H1 (cell line): ENCODE measurements at regions of chr11 and their contacts with region 1.

Region 1: DNA sequence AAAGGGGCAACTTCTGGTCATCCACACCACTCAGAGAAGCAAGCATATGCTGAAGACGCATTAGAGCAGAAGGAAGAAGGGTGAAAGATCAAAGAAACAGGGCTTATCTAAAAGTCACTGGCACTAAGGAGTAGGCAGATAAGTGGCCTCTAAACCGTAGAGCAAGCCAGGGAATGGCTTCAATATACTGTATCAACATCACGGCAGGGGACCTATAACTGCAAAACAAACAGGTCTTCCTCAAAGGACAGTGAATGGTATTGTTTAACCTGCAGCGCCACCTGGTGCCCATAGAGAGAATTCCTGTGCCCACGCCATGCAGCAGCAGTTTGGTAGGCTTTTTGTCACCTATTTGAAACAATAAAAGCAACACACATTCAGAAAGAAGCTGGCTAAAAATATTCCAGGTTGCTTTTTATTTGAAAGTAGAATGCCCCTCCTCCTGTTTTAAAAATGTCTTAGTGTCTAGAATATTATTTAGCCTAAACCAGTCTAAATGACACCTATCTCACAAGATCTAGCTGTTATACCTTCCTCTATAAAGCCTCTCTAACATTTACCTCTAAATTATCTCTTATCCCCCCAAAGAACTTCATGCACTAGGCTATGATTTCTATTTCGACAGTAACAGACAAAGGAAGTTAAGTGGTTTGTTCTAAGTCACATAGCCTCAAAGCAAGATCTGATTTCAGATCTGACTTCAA is 21.8 kb downstream of the SNX19 start:
- DNase-seq: peak; percentile 57 to 87
- H3K4me3 ChIP-seq: no peak overlapping the region
- H3K27ac ChIP-seq: no peak overlapping the region
- H3K4me1 ChIP-seq: peaks cover 2 to 8% (median 6%) of the 10 kb centered on the region in 4 experiments; a peak in 5 of 7 replicates
- H3K27me3 ChIP-seq: no peaks in the 10 kb centered on the region
- CTCF ChIP-seq: peak; percentile 75 to 90 (median 78)
- EP300 ChIP-seq: no peak
- POLR2A ChIP-seq: no peak
- RAD21 ChIP-seq: peak; percentile 84 to 86

Region 2: GRCh38 chr11:130872981-130873380 is 21.5 kb before region 1 on chr11:
- CTCF ChIA-PET with region 1: interaction called, 21 read pairs
- POLR2A ChIA-PET with region 1: interaction called, 3 read pairs
- DNase-seq: no peak
- H3K4me3 ChIP-seq: no peak overlapping the region
- H3K27ac ChIP-seq: no peak overlapping the region
- H3K4me1 ChIP-seq: no peaks in the 10 kb centered on the region
- H3K27me3 ChIP-seq: no peaks in the 10 kb centered on the region
- CTCF ChIP-seq: no peak
- EP300 ChIP-seq: no peak
- POLR2A ChIP-seq: no peak
- RAD21 ChIP-seq: no peak

Region 3: DNA sequence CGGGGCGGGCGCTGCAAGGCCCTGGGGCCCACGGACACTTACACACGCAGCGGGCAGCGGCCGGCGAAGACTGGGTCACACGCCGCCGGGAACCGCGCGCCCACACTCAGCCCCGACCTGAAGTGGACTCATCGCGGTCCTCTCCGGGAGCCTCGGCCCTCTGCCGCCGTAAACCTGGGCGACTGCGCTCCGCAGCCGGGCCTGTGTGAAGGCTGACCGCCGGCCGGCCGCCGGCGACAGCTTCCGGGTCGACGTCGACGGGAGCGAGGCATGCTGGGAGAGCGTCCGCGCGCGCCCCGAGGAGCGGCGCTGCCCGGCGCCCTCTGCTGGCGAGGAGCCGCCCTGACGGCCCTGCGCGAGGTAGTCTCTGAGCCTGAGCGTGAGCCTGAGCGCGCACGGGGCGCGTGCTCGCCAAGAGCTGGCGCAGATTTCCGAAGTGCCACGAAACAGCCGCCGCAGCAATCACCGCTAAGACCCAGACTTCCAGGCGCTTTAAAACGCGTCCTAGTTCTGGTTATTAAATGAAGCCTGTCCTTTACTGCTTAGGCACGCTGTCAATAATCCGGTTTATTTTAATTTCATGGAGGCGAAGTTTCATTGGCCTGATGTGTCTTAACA is 21.9 kb after region 1 on chr11 and contains the start of gene SNX19:
- CTCF ChIA-PET with region 1: interaction called, 16 read pairs
- POLR2A ChIA-PET with region 1: interaction called, 3 read pairs
- DNase-seq: peak; percentile 61 to 96
- H3K4me3 ChIP-seq: peak within 1 kb of the TSS; percentile 69 to 87 (median 76)
- H3K27ac ChIP-seq: 0 out of 2 replicates have a peak within 1 kb of the TSS, but pooled peaks have one; percentile 7
- H3K4me1 ChIP-seq: peaks cover 0 to 7% (median 3%) of the 10 kb centered on the region in 4 experiments; a peak in 5 of 7 replicates
- H3K27me3 ChIP-seq: peaks cover 0 to 15% (median 10%) of the 10 kb centered on the region in 4 experiments; a peak in 6 of 7 replicates
- CTCF ChIP-seq: peak; percentile 92 to 96 (median 94)
- EP300 ChIP-seq: peak in 1 of 2 experiments; percentile 41; a peak in 1 of 3 replicates
- POLR2A ChIP-seq: peak; percentile 55 to 90
- RAD21 ChIP-seq: peak; percentile 14 to 25; a peak in 1 of 4 replicates
- total RNA-seq, gene SNX19: 22.6 and 25.2 TPM in 2 replicates